Right ventricle myocardium inferior (tissue), 1 donor: ENCODE measurements at regions of chr5 and their contacts with region 1.

Region 1: DNA sequence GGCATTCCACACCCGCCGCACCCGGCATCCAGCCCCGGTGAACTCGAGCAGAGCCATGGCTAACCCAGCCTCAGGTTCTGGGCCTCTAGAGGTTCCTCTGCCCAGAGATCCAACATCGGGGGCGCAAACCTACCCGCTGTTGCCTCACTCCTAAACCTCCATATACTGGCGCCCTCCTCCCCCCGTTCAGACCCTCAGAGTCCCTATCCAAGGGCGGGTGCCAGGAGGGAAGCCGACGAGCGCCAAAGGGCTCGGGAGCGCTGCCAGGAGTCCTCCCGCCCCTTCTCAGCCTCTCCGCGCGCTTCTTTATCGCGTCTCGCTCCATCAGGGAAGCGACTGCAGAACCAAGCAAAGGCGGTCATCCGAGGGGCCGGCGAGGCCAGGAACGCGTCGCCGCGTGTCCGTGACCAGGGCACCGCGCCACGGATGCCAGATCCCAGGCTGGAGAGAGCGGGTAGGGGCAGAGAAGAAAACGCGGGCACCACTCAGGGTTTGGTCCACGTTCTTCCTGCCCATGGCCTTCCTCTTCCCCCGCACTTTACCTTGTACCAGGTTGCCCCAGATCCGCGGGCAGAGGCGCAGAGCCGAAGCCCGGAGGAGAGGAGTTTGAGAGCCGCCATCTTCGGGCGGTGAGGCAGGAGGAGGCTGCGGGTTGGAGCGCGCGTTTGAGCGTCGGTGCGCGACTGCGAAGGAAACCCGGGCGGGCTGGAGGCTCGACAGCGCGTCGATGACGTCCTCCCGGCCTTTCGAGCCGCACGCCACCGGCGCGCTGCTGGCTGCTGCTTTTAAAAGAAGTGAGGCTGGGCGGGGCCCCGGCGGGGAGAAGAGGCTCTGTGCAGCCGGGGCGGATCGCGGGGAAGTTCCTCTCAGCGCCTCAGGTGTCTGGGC is at the start of gene OXCT1:
- DNase-seq: peak; percentile 94
- ATAC-seq: peak; percentile 82
- total RNA-seq, gene OXCT1: 128 TPM

Region 2: DNA sequence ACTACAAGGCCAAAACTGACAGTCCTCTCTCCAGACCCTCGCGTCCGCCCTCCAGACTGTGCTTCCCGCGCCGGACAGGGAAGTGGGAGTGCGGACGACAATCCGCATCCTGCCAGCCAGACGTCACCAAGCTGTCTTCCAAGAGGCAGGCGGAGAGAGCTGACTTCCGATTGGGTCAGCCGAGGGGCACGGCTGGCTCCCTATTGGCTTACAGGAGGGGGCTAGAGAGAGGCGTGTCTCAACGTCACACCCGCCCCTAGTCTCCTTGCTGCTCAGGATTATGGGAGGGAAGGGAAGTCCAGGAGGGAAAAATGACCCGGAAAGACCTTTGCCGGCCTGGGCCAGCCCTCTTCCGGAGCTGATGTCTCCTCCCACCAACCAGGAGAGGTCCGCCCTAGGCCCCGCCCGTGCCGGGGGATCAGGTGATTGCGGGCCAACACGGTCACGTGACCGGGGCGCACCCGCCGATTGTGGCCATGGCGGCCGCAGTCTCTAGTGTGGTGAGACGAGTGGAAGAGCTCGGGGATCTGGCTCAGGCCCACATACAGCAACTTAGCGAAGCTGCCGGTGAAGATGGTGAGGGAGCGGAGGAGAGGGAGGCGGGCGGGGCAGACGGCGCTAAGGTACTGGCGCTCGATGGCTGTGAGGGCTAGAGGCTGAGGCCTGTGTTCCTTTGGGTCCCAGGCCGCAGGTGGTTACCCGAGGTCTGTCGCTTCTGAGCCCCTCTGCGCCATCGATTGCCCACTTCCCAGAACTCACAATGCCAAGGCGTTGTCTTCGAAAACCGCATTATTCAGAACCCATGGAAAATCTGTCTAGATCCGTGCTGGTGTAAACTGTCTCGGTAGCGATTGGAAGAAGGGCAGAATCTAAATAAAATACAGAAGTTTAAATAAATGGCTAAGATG is 34.2 kb after region 1 on chr5 and contains the start of gene RIMOC1:
- intact Hi-C with region 1: loop called (anchors 1 kb)
- DNase-seq: peak; percentile 99
- ATAC-seq: peak; percentile 99
- total RNA-seq, gene RIMOC1: 12.9 TPM

Region 3: DNA sequence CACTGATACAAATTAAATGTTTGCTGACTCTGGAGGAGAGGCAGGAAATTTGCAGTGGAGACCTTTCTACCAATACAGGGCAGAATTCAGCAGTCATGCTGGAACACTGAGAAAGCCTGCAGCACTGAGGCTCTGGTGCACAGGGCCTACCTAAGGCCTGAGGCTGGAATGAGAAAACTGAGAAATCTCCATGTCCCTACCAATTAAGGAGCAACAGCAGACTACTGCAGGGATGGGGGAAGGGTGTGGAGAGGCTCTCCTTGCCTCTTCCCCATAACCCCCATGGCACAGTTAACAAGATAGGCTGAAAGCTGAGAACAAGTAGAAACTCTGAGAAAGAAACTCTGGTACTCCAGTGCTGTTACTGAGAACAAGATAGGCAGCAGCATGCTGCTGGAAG is 65.6 kb after region 1 on chr5:
- intact Hi-C with region 1: no loop called
- DNase-seq: no peak
- ATAC-seq: no peak